Activated T-helper 1 cell treated with anti-CD3 and anti-CD28 coated beads, Interleukin-12 subunit alpha, Interleukin-12 subunit beta, Interleukin-2, Interleukin-4 antibody, amounts not matched to agents 30 ng/mL and 10 ng/mL and 1 ng/mL, durations not matched to agents 14 hours and 24 hours and 36 hours (primary cell): ENCODE measurements at regions of chr9 and their contacts with region 1.

Region 1: DNA sequence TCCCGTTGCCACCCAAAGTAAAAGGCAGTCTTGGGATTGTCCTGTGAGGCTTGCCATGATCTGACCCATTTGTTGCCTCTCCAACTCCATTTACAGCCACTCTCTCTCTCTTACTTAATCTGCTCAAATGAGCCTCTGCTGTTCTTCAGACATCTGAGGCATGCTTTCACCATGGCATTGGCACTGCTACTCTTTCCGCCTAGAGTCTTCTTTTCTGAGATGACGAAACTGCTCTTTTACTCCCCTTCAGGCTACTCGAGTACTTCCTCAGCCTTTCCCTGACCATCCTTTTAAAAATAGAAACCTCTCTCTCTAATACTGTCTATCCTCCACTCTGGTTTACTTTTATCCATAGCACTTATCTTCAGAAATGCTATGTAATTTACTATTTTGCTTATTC is 9.0 kb downstream of the FOCAD start:
- DNase-seq: no peak
- H3K4me3 Mint-ChIP-seq: no peak overlapping the region
- H3K27ac Mint-ChIP-seq: no peak overlapping the region
- H3K4me1 Mint-ChIP-seq: peaks cover 4% of the 10 kb centered on the region
- H3K27me3 Mint-ChIP-seq: no peaks in the 10 kb centered on the region

Region 2: GRCh38 chr9:20622330-20623020 is 70.6 kb before region 1 on chr9 and contains the start of gene MLLT3:
- intact Hi-C with region 1: no loop called
- DNase-seq: peak; percentile 97
- H3K4me3 Mint-ChIP-seq: peak within 1 kb of the TSS; percentile 88
- H3K27ac Mint-ChIP-seq: peak within 1 kb of the TSS; percentile 99
- H3K4me1 Mint-ChIP-seq: peaks cover 52% of the 10 kb centered on the region
- H3K27me3 Mint-ChIP-seq: no peaks in the 10 kb centered on the region
- total RNA-seq, gene MLLT3: 33.8 and 36.4 TPM in 2 replicates

Region 3: GRCh38 chr9:20815923-20816703 is 123.0 kb after region 1 on chr9:
- intact Hi-C with region 1: no loop called
- DNase-seq: no peak
- H3K4me3 Mint-ChIP-seq: no peak overlapping the region
- H3K27ac Mint-ChIP-seq: no peak overlapping the region
- H3K4me1 Mint-ChIP-seq: peaks cover 5% of the 10 kb centered on the region
- H3K27me3 Mint-ChIP-seq: no peaks in the 10 kb centered on the region

Region 4: GRCh38 chr9:20835364-20836286 is 142.6 kb after region 1 on chr9:
- intact Hi-C with region 1: loop called (anchors 10 kb)
- DNase-seq: no peak
- H3K4me3 Mint-ChIP-seq: no peak overlapping the region
- H3K27ac Mint-ChIP-seq: no peak overlapping the region
- H3K4me1 Mint-ChIP-seq: peaks cover 7% of the 10 kb centered on the region
- H3K27me3 Mint-ChIP-seq: no peaks in the 10 kb centered on the region